ENCODE measurements at regions of chr9 and their contacts with region 1.

Region 1: DNA sequence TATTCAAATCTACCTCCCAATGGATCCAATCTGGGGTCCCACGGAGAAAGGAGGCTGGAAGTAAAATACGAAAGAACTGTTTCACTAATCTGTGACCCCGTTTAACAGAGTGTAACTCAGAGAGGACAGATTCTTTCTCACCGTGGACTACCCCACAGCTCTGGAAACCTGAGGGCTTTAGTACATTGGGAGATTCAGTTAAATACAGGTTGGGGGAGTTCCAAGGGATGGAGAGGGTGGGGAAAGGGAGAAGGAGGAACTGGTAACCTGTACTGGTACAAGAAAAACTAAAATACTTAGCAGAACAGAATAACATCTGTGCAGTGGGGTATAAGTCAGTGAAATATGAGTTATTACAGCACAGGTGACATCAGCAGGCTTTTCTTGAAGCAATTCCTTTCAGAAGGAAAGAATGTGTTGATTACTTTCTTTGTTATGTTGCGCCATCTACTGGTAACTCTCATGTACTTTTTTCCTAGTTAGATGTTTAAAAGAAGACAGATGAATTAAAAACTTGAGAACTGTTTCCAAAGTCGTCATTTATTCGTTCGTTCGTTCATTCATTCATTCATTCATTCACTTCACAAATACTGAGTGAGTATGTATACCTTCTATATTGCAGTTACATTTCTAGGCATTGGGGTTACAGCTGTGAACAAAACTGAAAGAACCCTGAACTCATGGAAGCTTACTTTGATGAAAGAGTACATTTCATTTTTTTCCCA is 30.0 kb upstream of the STOM start:
- DNase-seq: peak; percentile 75
- ATAC-seq: peak; percentile 41
- H3K4me3 ChIP-seq: no peak overlapping the region
- H3K4me3 Mint-ChIP-seq: no peak overlapping the region
- H3K27ac ChIP-seq: no peak overlapping the region
- H3K27ac Mint-ChIP-seq: no peak overlapping the region
- H3K4me1 ChIP-seq: no peaks in the 10 kb centered on the region
- H3K4me1 Mint-ChIP-seq: no peaks in the 10 kb centered on the region
- H3K27me3 ChIP-seq: no peaks in the 10 kb centered on the region
- H3K27me3 Mint-ChIP-seq: no peaks in the 10 kb centered on the region
- CTCF ChIP-seq: peak; percentile 91

Region 2: GRCh38 chr9:120619751-120620655 is 780.0 kb before region 1 on chr9:
- CTCF ChIA-PET with region 1: interaction called, 3 read pairs
- POLR2A ChIA-PET with region 1: no interaction called
- intact Hi-C with region 1: loop called (anchors 5 kb)
- DNase-seq: peak; percentile 71
- ATAC-seq: peak; percentile 68
- H3K4me3 ChIP-seq: no peak overlapping the region
- H3K4me3 Mint-ChIP-seq: no peak overlapping the region
- H3K27ac ChIP-seq: no peak overlapping the region
- H3K27ac Mint-ChIP-seq: no peak overlapping the region
- H3K4me1 ChIP-seq: no peaks in the 10 kb centered on the region
- H3K4me1 Mint-ChIP-seq: peaks cover 2% of the 10 kb centered on the region
- H3K27me3 ChIP-seq: no peaks in the 10 kb centered on the region
- H3K27me3 Mint-ChIP-seq: no peaks in the 10 kb centered on the region
- CTCF ChIP-seq: peak; percentile 97

Region 3: DNA sequence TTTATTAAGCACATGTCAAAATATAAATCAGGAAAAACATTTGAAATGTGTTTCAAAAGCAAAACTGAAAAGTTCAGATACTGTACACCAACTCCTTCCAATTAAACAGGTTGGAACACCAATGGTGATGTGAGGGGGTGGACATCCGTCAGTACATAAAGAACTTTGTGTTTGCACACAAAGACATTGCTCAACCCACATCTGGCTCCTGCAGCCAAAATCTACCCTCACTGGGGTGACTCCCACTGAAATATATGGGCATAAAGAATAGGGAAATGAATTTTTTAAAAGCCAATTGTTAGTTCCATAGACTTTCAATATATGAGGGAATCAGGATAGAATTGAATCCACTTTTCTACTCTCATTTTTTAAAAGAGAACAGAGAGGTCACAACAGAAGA is 749.7 kb before region 1 on chr9:
- CTCF ChIA-PET with region 1: no interaction called
- POLR2A ChIA-PET with region 1: no interaction called
- intact Hi-C with region 1: no loop called
- DNase-seq: no peak
- ATAC-seq: no peak
- H3K4me3 ChIP-seq: no peak overlapping the region
- H3K4me3 Mint-ChIP-seq: no peak overlapping the region
- H3K27ac ChIP-seq: no peak overlapping the region
- H3K27ac Mint-ChIP-seq: no peak overlapping the region
- H3K4me1 ChIP-seq: no peaks in the 10 kb centered on the region
- H3K4me1 Mint-ChIP-seq: no peaks in the 10 kb centered on the region
- H3K27me3 ChIP-seq: no peaks in the 10 kb centered on the region
- H3K27me3 Mint-ChIP-seq: no peaks in the 10 kb centered on the region
- CTCF ChIP-seq: no peak

Region 4: DNA sequence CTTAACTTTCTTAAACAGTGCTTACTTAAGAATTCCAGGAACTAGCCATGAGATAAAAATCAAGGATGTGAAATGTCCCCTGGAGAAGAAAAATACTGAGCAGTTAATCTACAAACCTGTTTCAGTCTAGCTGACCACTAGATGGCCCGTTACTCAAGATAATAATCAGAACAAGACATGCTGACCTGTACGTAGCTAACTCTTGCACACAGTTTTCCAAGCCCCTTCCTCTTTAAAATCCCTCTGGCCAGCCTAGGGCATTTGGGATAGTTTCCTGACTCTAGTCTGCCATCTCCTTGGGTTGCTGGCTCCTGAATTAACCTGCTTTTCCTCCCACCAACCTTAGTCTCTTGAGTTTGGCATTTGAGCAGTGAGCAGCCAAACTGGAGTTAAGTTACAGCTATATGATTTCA is 414.2 kb before region 1 on chr9:
- CTCF ChIA-PET with region 1: interaction called, 18 read pairs
- POLR2A ChIA-PET with region 1: no interaction called
- intact Hi-C with region 1: loop called (anchors 1 kb)
- DNase-seq: peak; percentile 26
- ATAC-seq: no peak
- H3K4me3 ChIP-seq: no peak overlapping the region
- H3K4me3 Mint-ChIP-seq: no peak overlapping the region
- H3K27ac ChIP-seq: no peak overlapping the region
- H3K27ac Mint-ChIP-seq: no peak overlapping the region
- H3K4me1 ChIP-seq: peaks cover 0 to 3% of the 10 kb centered on the region in 2 donors
- H3K4me1 Mint-ChIP-seq: peaks cover 4% of the 10 kb centered on the region
- H3K27me3 ChIP-seq: no peaks in the 10 kb centered on the region
- H3K27me3 Mint-ChIP-seq: no peaks in the 10 kb centered on the region
- CTCF ChIP-seq: no peak

Region 5: GRCh38 chr9:121213136-121213806 is 186.8 kb before region 1 on chr9:
- CTCF ChIA-PET with region 1: interaction called, 70 read pairs
- POLR2A ChIA-PET with region 1: no interaction called
- intact Hi-C with region 1: loop called (anchors 1 kb)
- DNase-seq: peak; percentile 75
- ATAC-seq: peak; percentile 74
- H3K4me3 ChIP-seq: no peak overlapping the region
- H3K4me3 Mint-ChIP-seq: no peak overlapping the region
- H3K27ac ChIP-seq: no peak overlapping the region
- H3K27ac Mint-ChIP-seq: peak overlapping the region; percentile 42
- H3K4me1 ChIP-seq: peaks cover 5 to 14% of the 10 kb centered on the region in 2 donors
- H3K4me1 Mint-ChIP-seq: peaks cover 20% of the 10 kb centered on the region
- H3K27me3 ChIP-seq: no peaks in the 10 kb centered on the region
- H3K27me3 Mint-ChIP-seq: no peaks in the 10 kb centered on the region
- CTCF ChIP-seq: peak; percentile 94

Region 6: GRCh38 chr9:121278535-121279261 is 121.3 kb before region 1 on chr9:
- CTCF ChIA-PET with region 1: interaction called, 23 read pairs
- POLR2A ChIA-PET with region 1: no interaction called
- intact Hi-C with region 1: loop called (anchors 2 kb)
- DNase-seq: peak; percentile 62
- ATAC-seq: peak; percentile 82
- H3K4me3 ChIP-seq: no peak overlapping the region
- H3K4me3 Mint-ChIP-seq: no peak overlapping the region
- H3K27ac ChIP-seq: no peak overlapping the region
- H3K27ac Mint-ChIP-seq: peak overlapping the region; percentile 22
- H3K4me1 ChIP-seq: peaks cover 3 to 20% of the 10 kb centered on the region in 2 donors
- H3K4me1 Mint-ChIP-seq: peaks cover 22% of the 10 kb centered on the region
- H3K27me3 ChIP-seq: no peaks in the 10 kb centered on the region
- H3K27me3 Mint-ChIP-seq: no peaks in the 10 kb centered on the region
- CTCF ChIP-seq: peak; percentile 73

Region 7: GRCh38 chr9:121326130-121326838 is 73.8 kb before region 1 on chr9:
- CTCF ChIA-PET with region 1: interaction called, 371 read pairs
- POLR2A ChIA-PET with region 1: no interaction called
- intact Hi-C with region 1: no loop called
- DNase-seq: no peak
- ATAC-seq: no peak
- H3K4me3 ChIP-seq: no peak overlapping the region
- H3K4me3 Mint-ChIP-seq: no peak overlapping the region
- H3K27ac ChIP-seq: no peak overlapping the region
- H3K27ac Mint-ChIP-seq: no peak overlapping the region
- H3K4me1 ChIP-seq: no peaks in the 10 kb centered on the region
- H3K4me1 Mint-ChIP-seq: no peaks in the 10 kb centered on the region
- H3K27me3 ChIP-seq: no peaks in the 10 kb centered on the region
- H3K27me3 Mint-ChIP-seq: no peaks in the 10 kb centered on the region
- CTCF ChIP-seq: no peak

Region 8: DNA sequence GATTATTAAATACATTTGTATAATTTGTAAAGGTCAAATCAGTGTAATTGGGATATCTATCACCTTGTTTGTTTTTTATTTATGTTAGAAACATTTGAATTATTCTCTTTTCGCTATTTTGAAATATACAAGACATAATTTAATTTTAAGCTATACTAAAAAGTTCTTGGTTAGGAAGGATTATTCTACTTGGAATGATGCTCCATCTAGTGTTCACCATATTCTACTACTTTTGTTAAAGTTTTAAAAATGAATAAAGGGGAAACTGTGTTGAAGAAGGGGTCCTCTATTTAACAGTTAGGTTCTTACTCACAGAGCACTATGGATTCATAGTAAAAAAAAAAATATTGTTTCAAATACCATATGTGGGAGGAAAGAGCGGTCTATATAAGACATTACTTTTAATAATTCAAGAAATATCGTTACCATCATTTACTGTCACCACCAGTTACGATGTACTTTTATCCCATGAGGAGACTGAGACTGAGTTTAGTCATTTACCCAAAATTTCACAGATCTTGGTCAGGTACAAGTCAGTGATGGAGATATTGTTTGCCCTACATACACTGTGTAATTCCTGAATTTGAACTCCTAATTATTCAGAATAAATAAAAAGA is 23.7 kb before region 1 on chr9:
- CTCF ChIA-PET with region 1: interaction called, 29 read pairs
- POLR2A ChIA-PET with region 1: no interaction called
- intact Hi-C with region 1: no loop called
- DNase-seq: peak; percentile 16
- ATAC-seq: no peak
- H3K4me3 ChIP-seq: no peak overlapping the region
- H3K4me3 Mint-ChIP-seq: no peak overlapping the region
- H3K27ac ChIP-seq: no peak overlapping the region
- H3K27ac Mint-ChIP-seq: no peak overlapping the region
- H3K4me1 ChIP-seq: no peaks in the 10 kb centered on the region
- H3K4me1 Mint-ChIP-seq: peaks cover 5% of the 10 kb centered on the region
- H3K27me3 ChIP-seq: no peaks in the 10 kb centered on the region
- H3K27me3 Mint-ChIP-seq: no peaks in the 10 kb centered on the region
- CTCF ChIP-seq: peak; percentile 42

Region 9: DNA sequence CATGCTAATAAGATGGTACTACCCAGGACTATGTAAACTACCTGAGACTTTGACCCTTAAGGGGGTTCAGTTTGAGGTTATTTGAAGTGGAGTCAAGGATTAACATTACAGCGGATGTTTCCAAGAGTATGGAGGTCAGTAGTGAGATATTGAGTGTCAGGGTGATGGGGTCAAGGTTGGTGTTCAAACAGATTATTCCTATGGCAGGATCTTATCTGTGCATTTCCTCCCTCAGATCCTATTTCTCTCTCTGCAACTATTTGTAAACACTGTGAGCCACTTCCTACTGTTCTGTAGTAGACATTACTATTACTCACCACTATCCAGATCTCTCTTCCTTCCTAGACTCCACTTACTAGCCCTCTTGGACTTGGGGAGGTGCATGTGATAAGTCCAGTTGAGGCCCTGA is 24.0 kb after region 1 on chr9:
- CTCF ChIA-PET with region 1: no interaction called
- POLR2A ChIA-PET with region 1: no interaction called
- intact Hi-C with region 1: no loop called
- DNase-seq: no peak
- ATAC-seq: no peak
- H3K4me3 ChIP-seq: no peak overlapping the region
- H3K4me3 Mint-ChIP-seq: no peak overlapping the region
- H3K27ac ChIP-seq: no peak overlapping the region
- H3K27ac Mint-ChIP-seq: no peak overlapping the region
- H3K4me1 ChIP-seq: no peaks in the 10 kb centered on the region
- H3K4me1 Mint-ChIP-seq: no peaks in the 10 kb centered on the region
- H3K27me3 ChIP-seq: peaks cover 0 to 12% (median 1%) of the 10 kb centered on the region in 4 experiments
- H3K27me3 Mint-ChIP-seq: peaks cover 19% of the 10 kb centered on the region
- CTCF ChIP-seq: no peak

Region 10: GRCh38 chr9:121598965-121599871 is 199.2 kb after region 1 on chr9:
- CTCF ChIA-PET with region 1: no interaction called
- POLR2A ChIA-PET with region 1: no interaction called
- intact Hi-C with region 1: no loop called
- DNase-seq: no peak
- ATAC-seq: no peak
- H3K4me3 ChIP-seq: no peak overlapping the region
- H3K4me3 Mint-ChIP-seq: peak overlapping the region; percentile 7
- H3K27ac ChIP-seq: no peak overlapping the region
- H3K27ac Mint-ChIP-seq: no peak overlapping the region
- H3K4me1 ChIP-seq: peaks cover 8 to 14% of the 10 kb centered on the region in 2 donors
- H3K4me1 Mint-ChIP-seq: peaks cover 4% of the 10 kb centered on the region
- H3K27me3 ChIP-seq: peaks cover 0 to 57% (median 23%) of the 10 kb centered on the region in 4 experiments
- H3K27me3 Mint-ChIP-seq: peaks cover 59% of the 10 kb centered on the region
- CTCF ChIP-seq: no peak

Measured in B cell (primary cell).